ENCODE measurements at regions of chr11 and their contacts with region 1.

Region 1: GRCh38 chr11:117941163-117941707 is 12.0 kb upstream of the TMPRSS13 start:
- DNase-seq: no peak
- ATAC-seq: no peak
- H3K4me3 ChIP-seq: no peak overlapping the region
- H3K27ac ChIP-seq: no peak overlapping the region
- H3K4me1 ChIP-seq: peaks cover 0 to 18% (median 13%) of the 10 kb centered on the region in 9 donors
- H3K27me3 ChIP-seq: no peaks in the 10 kb centered on the region
- CTCF ChIP-seq: no peak

Region 2: DNA sequence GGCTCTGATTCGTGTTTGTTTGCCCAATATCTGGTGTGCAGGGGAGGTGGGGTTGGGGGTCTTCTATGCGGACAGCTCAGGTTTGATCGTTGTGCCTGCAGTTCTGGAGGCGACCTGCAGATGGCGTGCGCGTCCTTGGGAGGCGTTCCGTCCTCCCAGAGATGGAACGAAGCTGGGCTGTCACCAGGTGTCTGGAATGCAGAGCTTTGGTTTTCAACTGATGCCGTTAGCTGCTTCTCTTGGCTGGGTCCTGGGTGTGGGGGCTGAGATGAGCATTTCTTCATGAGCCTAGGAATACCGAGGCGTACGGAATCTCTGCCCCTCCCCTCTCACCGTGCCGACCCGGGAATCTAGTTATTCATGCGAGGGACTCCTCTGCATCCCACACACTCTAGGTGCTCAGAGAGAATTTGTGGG is 515.0 kb before region 1 on chr11:
- intact Hi-C with region 1: loop called in 5 of 10 experiments (anchors 5 to 10 kb)
- DNase-seq: peak; percentile 51 to 76
- ATAC-seq: peak; percentile 27 to 74 (median 68)
- H3K4me3 ChIP-seq: no peak overlapping the region
- H3K27ac ChIP-seq: no peak overlapping the region
- H3K4me1 ChIP-seq: peaks cover 0 to 7% (median 0%) of the 10 kb centered on the region in 9 donors
- H3K27me3 ChIP-seq: peaks cover 0 to 4% (median 0%) of the 10 kb centered on the region in 7 donors
- CTCF ChIP-seq: peak; percentile 82 to 97 (median 95)

Region 3: DNA sequence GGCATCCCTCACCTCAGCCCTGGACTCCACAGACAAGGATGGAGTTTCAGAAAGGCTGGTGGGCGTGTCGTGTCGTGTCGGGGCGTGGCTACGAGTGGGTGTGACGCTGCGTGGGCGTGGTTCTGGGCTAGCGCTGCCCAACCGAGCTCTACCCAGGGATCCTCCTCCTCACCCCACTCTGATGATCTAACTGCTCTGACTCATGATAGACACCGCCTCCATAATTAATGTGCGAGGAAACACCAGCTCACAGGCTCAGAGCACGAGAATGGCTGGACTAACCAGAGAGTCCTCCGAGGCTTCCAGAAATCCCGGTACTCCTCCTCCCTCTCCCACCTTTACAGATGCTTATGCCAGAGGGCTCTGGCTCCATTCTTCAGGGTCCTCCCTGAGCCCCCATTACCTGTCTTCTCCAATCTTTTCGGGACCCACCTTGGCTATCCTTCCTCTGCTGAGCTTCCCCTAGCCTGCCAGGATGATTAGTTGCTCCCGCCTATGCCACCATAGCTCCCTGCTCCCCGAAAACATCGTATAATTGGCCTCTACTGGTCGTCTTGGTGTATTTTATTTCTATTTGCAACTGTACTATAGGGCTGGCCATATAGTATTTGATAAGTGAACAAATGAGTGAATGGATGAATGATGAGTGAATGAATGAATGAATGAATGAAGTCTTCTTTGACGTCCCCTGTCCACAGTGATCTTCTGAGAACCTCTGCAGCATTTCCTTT is 33.8 kb before region 1 on chr11:
- intact Hi-C with region 1: loop called in 1 of 10 experiments (anchors 5 kb)
- DNase-seq: peak; percentile 82 to 85
- ATAC-seq: peak; percentile 85 to 97 (median 92)
- H3K4me3 ChIP-seq: no peak overlapping the region
- H3K27ac ChIP-seq: no peak overlapping the region
- H3K4me1 ChIP-seq: peaks cover 0 to 14% (median 5%) of the 10 kb centered on the region in 9 donors
- H3K27me3 ChIP-seq: peaks cover 0 to 8% (median 0%) of the 10 kb centered on the region in 7 donors
- CTCF ChIP-seq: no peak